T-cell (primary cell): ENCODE measurements at regions of chr20 and their contacts with region 1.

Region 1: DNA sequence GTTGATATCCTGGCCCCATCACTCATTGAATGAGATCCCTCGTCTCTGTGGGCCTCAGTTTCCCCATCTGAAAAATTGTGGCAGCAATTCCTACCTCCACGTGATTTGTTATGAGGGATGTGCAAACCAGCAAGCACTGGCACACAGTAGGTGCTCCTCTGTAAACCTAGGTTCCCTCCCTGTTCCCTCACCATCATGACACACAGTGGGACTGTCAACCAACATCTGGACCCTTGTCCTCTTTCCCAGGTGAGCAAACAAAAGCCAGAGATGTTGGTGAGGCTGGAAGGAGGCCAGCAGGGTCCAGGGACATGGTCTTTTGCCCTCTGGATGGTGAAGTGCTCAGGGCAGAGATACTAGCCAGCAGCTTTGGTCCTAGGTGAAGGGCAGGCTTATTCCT is 26.1 kb downstream of the RSPO4 start:
- DNase-seq: no peak
- ATAC-seq: no peak
- H3K4me3 ChIP-seq: no peak overlapping the region
- H3K4me3 Mint-ChIP-seq: no peak overlapping the region
- H3K27ac ChIP-seq: no peak overlapping the region
- H3K27ac Mint-ChIP-seq: no peak overlapping the region
- H3K4me1 ChIP-seq: no peaks in the 10 kb centered on the region
- H3K4me1 Mint-ChIP-seq: peaks cover 0 to 2% (median 2%) of the 10 kb centered on the region in 3 donors
- H3K27me3 ChIP-seq: peaks cover 0 to 8% of the 10 kb centered on the region in 2 experiments
- H3K27me3 Mint-ChIP-seq: peaks cover 10 to 16% of the 10 kb centered on the region in 2 donors

Region 2: GRCh38 chr20:775679-776135 is 200.3 kb before region 1 on chr20:
- CTCF ChIA-PET with region 1: no interaction called
- POLR2A ChIA-PET with region 1: interaction called in 1 of 2 experiments, 10 read pairs
- DNase-seq: no peak
- ATAC-seq: no peak
- H3K4me3 ChIP-seq: no peak overlapping the region
- H3K4me3 Mint-ChIP-seq: no peak overlapping the region
- H3K27ac ChIP-seq: no peak overlapping the region
- H3K27ac Mint-ChIP-seq: no peak overlapping the region
- H3K4me1 ChIP-seq: no peaks in the 10 kb centered on the region
- H3K4me1 Mint-ChIP-seq: no peaks in the 10 kb centered on the region
- H3K27me3 ChIP-seq: peaks cover 0 to 15% of the 10 kb centered on the region in 2 experiments
- H3K27me3 Mint-ChIP-seq: peaks cover 10 to 18% of the 10 kb centered on the region in 2 donors